ENCODE measurements at regions of chr4 and their contacts with region 1.

Region 1: GRCh38 chr4:109702950-109703663 is at the start of gene CASP6:
- DNase-seq: peak; percentile 52 to 92
- H3K4me3 ChIP-seq: peak within 1 kb of the TSS; percentile 58 to 77
- H3K27ac ChIP-seq: peak within 1 kb of the TSS; percentile 73 to 82
- H3K4me1 ChIP-seq: peaks cover 6 to 15% of the 10 kb centered on the region in 2 donors
- H3K27me3 ChIP-seq: no peaks in the 10 kb centered on the region
- CTCF ChIP-seq: peak; percentile 65 to 74 (median 69)
- total RNA-seq, gene CASP6: not detected

Region 2: GRCh38 chr4:109640644-109641043 is 62.5 kb before region 1 on chr4:
- intact Hi-C with region 1: no loop called
- DNase-seq: no peak
- H3K4me3 ChIP-seq: no peak overlapping the region
- H3K27ac ChIP-seq: no peak overlapping the region
- H3K4me1 ChIP-seq: no peaks in the 10 kb centered on the region
- H3K27me3 ChIP-seq: no peaks in the 10 kb centered on the region
- CTCF ChIP-seq: no peak

Region 3: GRCh38 chr4:109729718-109730618 is 26.9 kb after region 1 on chr4 and contains the start of gene PLA2G12A:
- intact Hi-C with region 1: loop called (anchors 1 kb)
- DNase-seq: peak; percentile 9 to 79
- H3K4me3 ChIP-seq: peak within 1 kb of the TSS; percentile 86 to 88
- H3K27ac ChIP-seq: peak within 1 kb of the TSS; percentile 70 to 71
- H3K4me1 ChIP-seq: peaks cover 0 to 6% of the 10 kb centered on the region in 2 donors
- H3K27me3 ChIP-seq: no peaks in the 10 kb centered on the region
- CTCF ChIP-seq: no peak
- total RNA-seq, gene PLA2G12A: 8.9 TPM

Measured in ascending aorta (tissue), 2 donors.